ENCODE measurements at regions of chr21 and their contacts with region 1.

Region 1: GRCh38 chr21:25421327-25422028 is 185.8 kb downstream of the MRPL39 start:
- DNase-seq: peak; percentile 93
- ATAC-seq: peak; percentile 61
- H3K4me3 ChIP-seq: peak overlapping the region; percentile 59
- H3K27ac ChIP-seq: peak overlapping the region; percentile 97
- H3K4me1 ChIP-seq: peaks cover 27% of the 10 kb centered on the region
- H3K27me3 ChIP-seq: no peaks in the 10 kb centered on the region
- CTCF ChIP-seq: peak; percentile 65 to 84 (median 71); a peak in 4 of 6 replicates
- EP300 ChIP-seq: 0 out of 4 replicates have a peak, but pooled peaks have one; percentile 34 to 58
- POLR2A ChIP-seq: 0 out of 2 replicates have a peak, but pooled peaks have one; percentile 50
- RAD21 ChIP-seq: peak; percentile 88

Region 2: DNA sequence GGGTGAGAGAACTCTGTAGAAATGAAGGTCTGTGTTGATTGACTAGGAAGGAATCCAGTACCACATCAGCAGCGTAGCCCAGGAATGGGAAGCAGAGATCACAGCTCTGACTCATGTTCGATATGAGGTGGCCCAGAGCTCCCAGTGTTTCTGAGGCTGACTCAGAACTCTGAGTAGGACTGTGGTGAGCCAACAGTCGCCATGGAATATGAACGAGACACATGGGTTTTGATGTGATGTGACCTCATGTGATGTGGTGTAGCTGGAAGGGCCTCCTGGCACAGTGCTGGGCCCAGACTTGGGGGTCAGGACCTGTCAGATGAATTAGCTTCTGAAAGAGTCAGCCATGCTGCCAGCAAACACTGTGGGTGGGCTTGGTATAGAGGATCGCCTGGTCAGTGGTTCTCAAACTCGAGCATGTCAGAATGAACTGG is 51.1 kb before region 1 on chr21:
- CTCF ChIA-PET with region 1: no interaction called
- POLR2A ChIA-PET with region 1: no interaction called
- RAD21 ChIA-PET with region 1: no interaction called
- SMC1A ChIA-PET with region 1: no interaction called
- in situ Hi-C with region 1: no loop called
- intact Hi-C with region 1: no loop called
- DNase-seq: no peak
- ATAC-seq: no peak
- H3K4me3 ChIP-seq: no peak overlapping the region
- H3K27ac ChIP-seq: no peak overlapping the region
- H3K4me1 ChIP-seq: no peaks in the 10 kb centered on the region
- H3K27me3 ChIP-seq: no peaks in the 10 kb centered on the region
- CTCF ChIP-seq: no peak
- EP300 ChIP-seq: no peak
- POLR2A ChIP-seq: no peak
- RAD21 ChIP-seq: no peak

Region 3: DNA sequence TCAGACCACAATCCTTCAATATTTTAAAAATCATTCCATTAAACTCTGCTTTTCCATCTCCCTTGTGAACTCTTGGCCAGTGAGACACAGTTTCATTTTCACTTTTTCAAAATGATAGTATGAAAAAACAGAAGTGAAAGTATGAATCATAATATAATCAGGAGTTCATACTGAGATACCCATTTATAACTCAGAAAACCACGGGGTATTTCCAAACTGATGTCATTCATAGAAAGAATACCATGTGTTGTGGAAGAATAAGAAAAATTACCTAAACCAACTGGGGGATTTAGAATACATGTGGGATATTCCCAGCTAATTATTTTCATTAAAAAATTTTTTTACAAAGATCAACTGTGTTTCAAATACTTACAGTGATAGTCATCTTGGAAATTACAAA is 35.9 kb after region 1 on chr21:
- CTCF ChIA-PET with region 1: interaction called, 8 read pairs
- POLR2A ChIA-PET with region 1: interaction called, 51 read pairs
- RAD21 ChIA-PET with region 1: interaction called, 48 read pairs
- SMC1A ChIA-PET with region 1: interaction called, 61 read pairs
- in situ Hi-C with region 1: no loop called
- intact Hi-C with region 1: loop called (anchors 1 kb)
- DNase-seq: peak; percentile 83
- ATAC-seq: peak; percentile 60
- H3K4me3 ChIP-seq: no peak overlapping the region
- H3K27ac ChIP-seq: peak overlapping the region; percentile 98
- H3K4me1 ChIP-seq: peaks cover 52% of the 10 kb centered on the region
- H3K27me3 ChIP-seq: no peaks in the 10 kb centered on the region
- CTCF ChIP-seq: no peak
- EP300 ChIP-seq: peak; percentile 100
- POLR2A ChIP-seq: no peak
- RAD21 ChIP-seq: peak; percentile 25; the same call in 1 of the 2 replicates

Region 4: DNA sequence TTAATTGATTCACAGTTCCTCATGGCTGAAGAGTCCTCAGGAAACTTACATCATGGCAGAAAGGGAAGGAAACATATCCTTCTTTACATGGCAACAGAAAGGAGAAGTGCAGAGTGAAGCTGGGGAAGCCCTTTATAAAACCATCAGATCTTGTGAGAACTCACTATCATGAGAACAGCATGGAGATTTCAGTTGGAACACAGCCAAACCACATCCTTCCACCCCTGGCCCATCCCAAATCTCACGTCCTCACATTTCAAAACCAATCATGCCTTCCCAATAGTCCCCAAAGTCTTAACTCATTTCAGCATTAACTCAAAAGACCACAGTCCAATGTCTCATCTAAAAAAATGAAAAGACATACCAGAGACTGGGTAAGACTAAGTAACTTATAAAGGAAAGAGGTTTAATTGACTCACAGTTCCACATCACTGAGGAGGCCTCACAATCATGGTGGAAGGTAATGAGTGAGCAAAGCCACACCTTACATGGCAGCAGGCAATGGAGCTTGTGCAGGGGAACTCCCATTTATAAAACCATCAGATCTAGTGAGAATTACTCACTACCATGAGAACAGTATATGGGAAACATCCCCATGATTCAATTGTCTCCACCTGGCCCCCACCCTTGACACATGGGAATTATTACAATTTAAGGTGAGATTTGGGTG is 80.7 kb after region 1 on chr21:
- CTCF ChIA-PET with region 1: interaction called, 8 read pairs
- POLR2A ChIA-PET with region 1: interaction called, 3 read pairs
- RAD21 ChIA-PET with region 1: interaction called, 37 read pairs
- SMC1A ChIA-PET with region 1: interaction called, 49 read pairs
- in situ Hi-C with region 1: loop called (anchors 5 kb)
- intact Hi-C with region 1: loop called (anchors 1 kb)
- DNase-seq: peak; percentile 87
- ATAC-seq: peak; percentile 78
- H3K4me3 ChIP-seq: no peak overlapping the region
- H3K27ac ChIP-seq: peak overlapping the region; percentile 83
- H3K4me1 ChIP-seq: peaks cover 31% of the 10 kb centered on the region
- H3K27me3 ChIP-seq: no peaks in the 10 kb centered on the region
- CTCF ChIP-seq: no peak
- EP300 ChIP-seq: peak; percentile 8 to 26; a peak in 2 of 4 replicates
- POLR2A ChIP-seq: no peak
- RAD21 ChIP-seq: peak; percentile 17; the same call in 1 of the 2 replicates

Region 5: DNA sequence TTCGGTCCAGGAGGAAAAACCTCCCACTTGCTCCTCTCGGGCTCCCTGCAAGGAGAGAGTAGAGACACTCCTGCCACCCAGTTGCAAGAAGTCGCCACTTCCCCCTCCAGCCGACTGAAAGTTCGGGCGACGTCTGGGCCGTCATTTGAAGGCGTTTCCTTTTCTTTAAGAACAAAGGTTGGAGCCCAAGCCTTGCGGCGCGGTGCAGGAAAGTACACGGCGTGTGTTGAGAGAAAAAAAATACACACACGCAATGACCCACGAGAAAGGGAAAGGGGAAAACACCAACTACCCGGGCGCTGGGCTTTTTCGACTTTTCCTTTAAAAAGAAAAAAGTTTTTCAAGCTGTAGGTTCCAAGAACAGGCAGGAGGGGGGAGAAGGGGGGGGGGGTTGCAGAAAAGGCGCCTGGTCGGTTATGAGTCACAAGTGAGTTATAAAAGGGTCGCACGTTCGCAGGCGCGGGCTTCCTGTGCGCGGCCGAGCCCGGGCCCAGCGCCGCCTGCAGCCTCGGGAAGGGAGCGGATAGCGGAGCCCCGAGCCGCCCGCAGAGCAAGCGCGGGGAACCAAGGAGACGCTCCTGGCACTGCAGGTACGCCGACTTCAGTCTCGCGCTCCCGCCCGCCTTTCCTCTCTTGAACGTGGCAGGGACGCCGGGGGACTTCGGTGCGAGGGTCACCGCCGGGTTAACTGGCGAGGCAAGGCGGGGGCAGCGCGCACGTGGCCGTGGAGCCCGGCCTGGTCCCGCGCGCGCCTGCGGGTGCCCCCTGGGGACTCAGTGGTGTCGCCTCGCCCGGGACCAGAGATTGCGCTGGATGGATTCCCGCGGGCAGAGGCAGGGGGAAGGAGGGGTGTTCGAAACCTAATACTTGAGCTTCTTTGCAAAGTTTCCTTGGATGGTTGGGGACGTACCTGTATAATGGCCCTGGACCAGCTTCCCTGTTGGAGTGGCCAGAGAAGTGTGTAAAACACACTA is 140.5 kb after region 1 on chr21:
- CTCF ChIA-PET with region 1: interaction called, 163 read pairs
- POLR2A ChIA-PET with region 1: interaction called, 55 read pairs
- RAD21 ChIA-PET with region 1: interaction called, 253 read pairs
- SMC1A ChIA-PET with region 1: interaction called, 426 read pairs
- in situ Hi-C with region 1: loop called (anchors 5 kb)
- intact Hi-C with region 1: loop called (anchors 1 kb)
- DNase-seq: peak; percentile 66
- ATAC-seq: peak; percentile 57
- H3K4me3 ChIP-seq: peak overlapping the region; percentile 87
- H3K27ac ChIP-seq: peak overlapping the region; percentile 92
- H3K4me1 ChIP-seq: peaks cover 10% of the 10 kb centered on the region
- H3K27me3 ChIP-seq: no peaks in the 10 kb centered on the region
- CTCF ChIP-seq: peak in 1 of 3 experiments; percentile 10; a peak in 2 of 6 replicates
- EP300 ChIP-seq: 0 out of 4 replicates have a peak, but pooled peaks have one; percentile 6 to 10
- POLR2A ChIP-seq: peak; percentile 96
- RAD21 ChIP-seq: peak; percentile 49

Region 6: DNA sequence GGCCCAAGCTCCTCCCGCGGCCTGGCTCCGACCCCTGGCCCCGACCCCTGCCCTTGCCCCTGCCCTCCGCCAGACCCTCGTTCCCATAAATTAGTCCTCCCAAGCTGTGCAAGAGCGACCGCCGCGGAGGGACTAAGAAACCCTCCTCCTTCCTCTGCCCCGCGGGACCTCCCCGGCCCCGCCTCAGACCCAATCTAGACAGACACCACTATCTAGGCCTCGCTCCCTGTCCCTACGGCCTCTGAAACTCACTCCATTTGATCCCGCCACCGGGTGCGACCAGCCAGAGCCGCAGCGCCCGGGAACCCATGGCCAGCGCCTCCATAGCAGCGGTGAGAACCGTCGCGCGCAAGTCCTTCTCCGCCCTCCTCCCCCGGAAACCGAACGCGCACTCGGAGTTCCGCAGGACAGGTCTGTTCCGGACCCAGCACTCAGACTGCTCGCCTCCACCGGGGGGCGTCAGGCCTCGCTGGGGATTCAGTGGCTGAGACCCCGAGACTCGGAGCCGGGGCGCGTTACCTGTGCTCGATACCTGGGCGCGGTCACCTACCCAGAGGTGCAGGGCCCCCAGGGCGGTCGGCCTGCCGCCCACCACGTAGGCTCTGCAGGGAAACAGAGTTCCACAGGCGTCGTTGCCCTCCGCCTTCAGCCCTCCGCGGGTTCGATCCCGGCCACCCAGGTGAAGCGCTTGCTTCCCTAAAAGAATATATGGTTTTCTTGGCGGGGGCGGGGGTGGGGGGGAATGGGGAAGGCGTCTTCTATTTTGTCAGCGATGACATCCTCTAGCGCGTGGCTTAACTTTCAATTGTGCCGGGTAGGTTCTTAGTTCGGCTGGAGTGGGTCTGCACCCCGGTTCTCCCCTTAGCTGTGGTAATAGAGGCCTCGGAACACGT is 185.9 kb after region 1 on chr21 and contains the start of gene MRPL39:
- CTCF ChIA-PET with region 1: interaction called, 25 read pairs
- POLR2A ChIA-PET with region 1: interaction called, 3 read pairs
- RAD21 ChIA-PET with region 1: interaction called, 15 read pairs
- SMC1A ChIA-PET with region 1: interaction called, 51 read pairs
- in situ Hi-C with region 1: no loop called
- intact Hi-C with region 1: loop called (anchors 1 kb)
- DNase-seq: peak; percentile 62
- ATAC-seq: peak; percentile 97
- H3K4me3 ChIP-seq: peak within 1 kb of the TSS; percentile 94
- H3K27ac ChIP-seq: peak within 1 kb of the TSS; percentile 79
- H3K4me1 ChIP-seq: peaks cover 9% of the 10 kb centered on the region; the same call in 1 of the 2 replicates
- H3K27me3 ChIP-seq: no peaks in the 10 kb centered on the region
- CTCF ChIP-seq: peak; percentile 74 to 81 (median 78)
- EP300 ChIP-seq: 0 out of 4 replicates have a peak, but pooled peaks of 1 of the 2 experiments have one; percentile 11
- POLR2A ChIP-seq: peak; percentile 97
- RAD21 ChIP-seq: peak; percentile 53
- polyA plus RNA-seq, gene MRPL39: 220 to 292 TPM